Endothelial cell of umbilical vein (primary cell): ENCODE measurements at regions of chr4 and their contacts with region 1.

Region 1: DNA sequence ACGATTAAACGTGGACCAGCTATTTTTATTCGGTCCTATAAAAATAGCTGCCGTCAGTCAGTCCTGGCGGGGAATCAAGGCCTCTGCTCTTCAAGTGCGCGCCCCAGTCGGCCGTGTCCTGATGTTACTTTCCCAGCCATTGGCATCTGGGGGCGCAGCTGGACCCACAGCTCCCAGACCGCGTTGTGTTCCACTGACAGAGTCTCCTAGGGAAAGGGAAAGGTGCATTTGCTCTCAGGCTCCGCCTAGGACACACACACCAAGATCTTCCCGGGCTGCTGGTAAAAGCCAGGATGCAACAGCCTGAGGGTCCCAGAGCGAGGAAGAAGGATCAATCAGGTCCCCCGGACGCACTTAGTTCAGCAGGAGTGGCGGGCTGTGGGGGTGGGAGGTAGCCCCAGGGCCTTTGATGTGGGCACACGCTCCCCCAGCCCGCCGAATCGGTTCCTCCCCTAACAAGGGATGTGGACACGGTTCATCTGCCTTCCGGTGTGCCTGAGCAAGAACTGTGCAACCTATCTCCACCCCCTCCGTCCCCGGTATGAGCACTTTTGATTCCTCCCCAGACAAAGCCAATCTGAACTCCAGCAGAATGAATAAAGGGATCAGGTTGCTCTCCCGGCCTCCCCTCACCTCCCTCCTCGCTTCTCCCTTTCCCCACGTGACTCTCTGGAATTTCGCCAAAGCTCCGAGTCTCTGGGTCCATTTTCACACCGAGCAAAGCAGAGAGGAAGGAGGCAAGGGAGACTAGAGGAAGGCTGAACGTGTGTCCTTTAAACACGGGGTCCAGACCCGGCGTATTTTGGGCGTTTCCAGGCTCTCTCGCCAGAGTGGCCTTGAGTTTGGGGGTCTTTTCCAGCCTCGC is 626 bp upstream of the FRAS1 start:
- DNase-seq: peak; percentile 41
- H3K4me3 ChIP-seq: peak overlapping the region; percentile 47 to 80 (median 51)
- H3K27ac ChIP-seq: no peak overlapping the region
- H3K4me1 ChIP-seq: peaks cover 28% of the 10 kb centered on the region
- H3K27me3 ChIP-seq: peaks cover 15 to 19% of the 10 kb centered on the region in 2 experiments
- CTCF ChIP-seq: no peak
- POLR2A ChIP-seq: no peak

Region 2: GRCh38 chr4:77697860-77698590 is 358.5 kb before region 1 on chr4:
- CTCF ChIA-PET with region 1: no interaction called
- POLR2A ChIA-PET with region 1: no interaction called
- dilution Hi-C with region 1: no loop called
- intact Hi-C with region 1: loop called (anchors 2 kb)
- DNase-seq: peak; percentile 89
- H3K4me3 ChIP-seq: no peak overlapping the region
- H3K27ac ChIP-seq: no peak overlapping the region
- H3K4me1 ChIP-seq: peaks cover 27% of the 10 kb centered on the region
- H3K27me3 ChIP-seq: no peaks in the 10 kb centered on the region
- CTCF ChIP-seq: peak; percentile 41 to 50
- POLR2A ChIP-seq: no peak

Region 3: DNA sequence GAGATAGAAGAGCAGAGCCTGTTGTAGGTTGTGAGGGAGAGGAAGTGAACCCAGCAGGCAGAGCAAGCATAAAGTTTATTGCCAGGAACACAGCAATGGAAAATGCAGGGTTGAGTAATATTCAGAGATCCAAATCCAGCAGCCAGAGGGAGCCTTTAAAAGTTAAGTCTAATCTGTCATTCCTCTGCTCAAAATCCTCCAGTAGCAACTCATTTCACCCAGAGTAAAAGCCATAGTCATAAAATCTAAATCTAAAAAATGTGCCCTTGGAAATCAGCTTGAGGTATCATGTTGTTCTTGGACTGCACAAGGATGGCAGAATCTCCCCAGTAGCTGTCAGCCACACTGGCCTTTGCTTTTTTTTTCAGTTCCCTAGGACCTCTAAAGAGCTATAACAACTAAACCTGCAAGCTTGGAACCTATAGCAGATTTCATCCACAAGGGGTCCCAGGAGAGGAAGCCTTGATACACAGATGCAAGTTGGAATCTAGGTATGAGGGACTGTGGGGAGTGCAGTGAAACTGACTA is 62.2 kb before region 1 on chr4:
- CTCF ChIA-PET with region 1: interaction called, 7 read pairs
- POLR2A ChIA-PET with region 1: no interaction called
- dilution Hi-C with region 1: no loop called
- intact Hi-C with region 1: loop called (anchors 2 kb)
- DNase-seq: peak; percentile 69
- H3K4me3 ChIP-seq: no peak overlapping the region
- H3K27ac ChIP-seq: no peak overlapping the region
- H3K4me1 ChIP-seq: peaks cover 9% of the 10 kb centered on the region
- H3K27me3 ChIP-seq: peaks cover 0 to 6% of the 10 kb centered on the region in 2 experiments
- CTCF ChIP-seq: peak; percentile 36 to 67
- POLR2A ChIP-seq: no peak

Region 4: DNA sequence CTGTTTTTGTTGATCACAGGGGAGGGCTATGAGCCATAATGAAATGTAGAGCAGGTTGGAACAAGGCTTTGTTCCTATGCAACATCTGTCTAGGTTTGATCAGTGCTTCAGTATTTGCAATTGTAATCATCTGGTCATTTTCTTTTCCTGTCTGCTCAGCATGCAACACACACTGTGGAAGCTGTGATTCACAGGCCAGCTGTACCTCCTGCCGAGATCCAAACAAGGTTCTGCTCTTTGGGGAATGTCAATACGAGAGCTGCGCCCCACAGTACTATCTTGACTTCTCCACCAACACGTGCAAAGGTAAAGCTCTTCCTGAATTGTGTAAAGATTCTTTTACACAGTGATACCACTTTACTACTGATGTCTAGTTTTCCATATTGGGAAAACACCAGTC is 313.2 kb after region 1 on chr4:
- CTCF ChIA-PET with region 1: no interaction called
- POLR2A ChIA-PET with region 1: no interaction called
- dilution Hi-C with region 1: no loop called
- intact Hi-C with region 1: no loop called
- DNase-seq: no peak
- H3K4me3 ChIP-seq: no peak overlapping the region
- H3K27ac ChIP-seq: no peak overlapping the region
- H3K4me1 ChIP-seq: no peaks in the 10 kb centered on the region
- H3K27me3 ChIP-seq: no peaks in the 10 kb centered on the region
- CTCF ChIP-seq: no peak
- POLR2A ChIP-seq: no peak

Region 5: GRCh38 chr4:78551479-78552351 is 495.2 kb after region 1 on chr4 and contains the start of gene ANXA3:
- CTCF ChIA-PET with region 1: no interaction called
- POLR2A ChIA-PET with region 1: no interaction called
- dilution Hi-C with region 1: no loop called
- intact Hi-C with region 1: loop called (anchors 1 kb)
- DNase-seq: peak; percentile 39
- H3K4me3 ChIP-seq: peak within 1 kb of the TSS; percentile 38 to 89 (median 63)
- H3K27ac ChIP-seq: peak within 1 kb of the TSS; percentile 98
- H3K4me1 ChIP-seq: peaks cover 26% of the 10 kb centered on the region
- H3K27me3 ChIP-seq: no peaks in the 10 kb centered on the region
- CTCF ChIP-seq: peak in 1 of 2 donors; percentile 4
- POLR2A ChIP-seq: peak; percentile 63
- total RNA-seq, gene ANXA3: 73.8 and 78.4 TPM in 2 replicates

Region 6: DNA sequence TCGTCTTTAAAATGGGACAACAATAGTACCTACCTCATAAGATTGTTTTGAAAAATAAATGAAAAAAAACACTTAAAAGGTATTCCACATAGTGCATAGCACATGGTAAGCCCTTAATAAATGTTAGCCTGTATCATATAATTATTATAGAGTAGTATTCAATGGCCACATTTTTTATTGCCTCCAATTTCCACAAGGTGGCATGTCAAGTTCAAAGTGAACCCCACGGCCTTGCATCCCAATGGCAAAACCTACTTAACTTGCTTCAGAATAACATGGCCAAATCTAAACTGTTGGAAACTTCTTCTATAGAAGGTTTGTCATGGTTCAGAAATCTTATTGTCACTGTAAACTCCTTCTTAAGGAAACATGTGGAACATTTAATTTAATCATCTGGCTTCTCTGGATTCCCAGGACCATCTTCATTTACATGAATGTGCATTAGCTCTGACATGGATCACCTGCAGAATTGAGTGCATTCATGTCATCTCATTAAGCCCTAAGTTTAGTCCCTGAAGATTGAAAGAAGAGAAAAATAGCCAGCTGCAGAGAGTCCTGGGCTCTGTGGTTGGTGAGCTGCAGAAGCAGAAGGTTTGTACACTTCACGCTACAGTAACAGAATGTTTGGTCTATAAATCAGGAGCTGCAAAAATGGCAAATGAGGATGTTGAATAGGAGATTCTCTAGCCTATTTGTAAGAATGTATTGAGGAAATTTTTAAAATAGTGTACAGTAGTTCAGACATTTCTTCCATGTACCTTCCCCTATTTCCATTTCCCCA is 556.1 kb after region 1 on chr4:
- CTCF ChIA-PET with region 1: no interaction called
- POLR2A ChIA-PET with region 1: no interaction called
- dilution Hi-C with region 1: no loop called
- intact Hi-C with region 1: loop called (anchors 5 kb)
- DNase-seq: peak; percentile 62
- H3K4me3 ChIP-seq: no peak overlapping the region
- H3K27ac ChIP-seq: no peak overlapping the region
- H3K4me1 ChIP-seq: no peaks in the 10 kb centered on the region
- H3K27me3 ChIP-seq: no peaks in the 10 kb centered on the region
- CTCF ChIP-seq: peak; percentile 45 to 46
- POLR2A ChIP-seq: no peak

Region 7: GRCh38 chr4:78938868-78939666 is 882.6 kb after region 1 on chr4 and contains the start of gene PAQR3:
- CTCF ChIA-PET with region 1: interaction called, 3 read pairs
- POLR2A ChIA-PET with region 1: no interaction called
- dilution Hi-C with region 1: no loop called
- intact Hi-C with region 1: loop called (anchors 5 kb)
- DNase-seq: peak; percentile 82
- H3K4me3 ChIP-seq: peak within 1 kb of the TSS; percentile 56 to 84 (median 62)
- H3K27ac ChIP-seq: peak within 1 kb of the TSS; percentile 4
- H3K4me1 ChIP-seq: peaks cover 13% of the 10 kb centered on the region
- H3K27me3 ChIP-seq: peaks cover 6 to 7% of the 10 kb centered on the region in 2 experiments
- CTCF ChIP-seq: no peak
- POLR2A ChIP-seq: peak; percentile 94
- total RNA-seq, gene PAQR3: 19.0 and 21.0 TPM in 2 replicates